K562 (cell line): ENCODE measurements at regions of chr11 and their contacts with region 1.

Region 1: DNA sequence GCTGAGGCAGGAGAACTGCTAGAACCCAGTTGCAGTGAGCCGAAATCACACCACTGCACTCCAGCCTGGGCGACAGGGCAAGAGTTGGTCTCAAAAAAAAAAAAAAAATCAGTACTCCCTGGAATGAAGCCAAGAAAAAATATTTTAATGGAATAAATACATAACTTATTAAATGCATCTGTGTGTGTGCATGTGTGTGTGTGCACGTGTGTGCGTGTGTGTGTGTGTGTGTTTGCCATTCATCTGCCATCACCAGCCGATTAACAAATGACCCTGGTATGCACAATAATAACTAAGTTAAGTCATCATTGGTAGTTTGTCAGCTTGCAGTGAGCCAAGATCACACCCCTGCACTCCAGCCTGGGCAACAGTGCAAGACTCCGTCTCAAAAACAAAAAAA is 35.0 kb upstream of the SCGB1A1 start:
- DNase-seq: no peak
- ATAC-seq: no peak
- H3K4me3 ChIP-seq: no peak overlapping the region
- H3K27ac ChIP-seq: no peak overlapping the region
- H3K4me1 ChIP-seq: peaks cover 4 to 7% of the 10 kb centered on the region in 2 experiments; a peak in 3 of 5 replicates
- H3K27me3 ChIP-seq: no peaks in the 10 kb centered on the region
- CTCF ChIP-seq: no peak
- EP300 ChIP-seq: no peak
- POLR2A ChIP-seq: no peak
- RAD21 ChIP-seq: no peak

Region 2: GRCh38 chr11:62542750-62543567 is 159.1 kb after region 1 on chr11:
- CTCF ChIA-PET with region 1: no interaction called
- POLR2A ChIA-PET with region 1: no interaction called
- in situ Hi-C with region 1: no loop called
- intact Hi-C with region 1: no loop called
- DNase-seq: peak; percentile 83 to 91 (median 87)
- ATAC-seq: peak; percentile 74
- H3K4me3 ChIP-seq: peak overlapping the region; percentile 14; the same call in 1 of the 2 replicates
- H3K27ac ChIP-seq: peak overlapping the region; percentile 27
- H3K4me1 ChIP-seq: peaks cover 77 to 88% of the 10 kb centered on the region in 2 experiments
- H3K27me3 ChIP-seq: no peaks in the 10 kb centered on the region
- CTCF ChIP-seq: peak; percentile 97 to 98 (median 97)
- EP300 ChIP-seq: 0 out of 2 replicates have a peak, but pooled peaks have one; percentile 7
- POLR2A ChIP-seq: no peak
- RAD21 ChIP-seq: peak; percentile 94 to 99

Region 3: DNA sequence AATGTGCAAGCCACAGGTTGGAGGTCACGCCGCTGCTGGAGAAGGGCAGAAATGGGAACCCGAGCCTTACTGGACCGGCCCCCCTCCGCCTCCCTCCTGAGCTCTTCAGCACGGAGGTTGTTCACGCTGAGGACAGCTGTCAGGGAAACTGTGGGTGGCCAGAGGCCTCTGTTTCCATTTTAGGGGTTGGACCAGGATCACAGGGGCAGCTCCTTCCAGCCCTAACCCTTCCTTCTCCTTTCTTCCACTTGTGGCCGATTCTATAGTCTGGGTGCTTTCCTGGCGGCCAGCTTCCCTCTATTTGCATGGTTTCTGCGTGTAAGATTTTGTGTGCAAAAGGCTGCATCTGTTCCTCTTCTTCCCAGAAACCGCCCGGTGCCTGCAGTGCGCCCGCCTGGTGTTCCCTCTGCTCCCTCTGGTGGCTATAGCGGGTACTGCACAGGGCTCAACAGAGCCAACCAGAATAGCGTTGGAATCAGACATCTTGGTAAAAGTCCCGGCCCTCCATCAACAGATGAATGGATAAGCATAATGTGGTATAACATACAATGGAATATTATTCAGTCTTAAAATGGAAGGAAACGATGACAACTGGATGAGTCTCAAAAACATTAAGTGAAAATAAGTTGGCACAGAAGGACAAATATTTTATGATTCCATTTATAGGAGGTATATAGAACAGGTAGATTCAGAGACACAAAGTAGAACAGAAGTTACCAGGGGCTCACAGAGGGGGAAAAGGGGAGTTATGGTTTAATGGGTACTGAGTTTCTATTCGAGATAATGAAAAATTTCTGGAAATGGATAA is 640.2 kb after region 1 on chr11:
- CTCF ChIA-PET with region 1: interaction called, 4 read pairs
- POLR2A ChIA-PET with region 1: no interaction called
- in situ Hi-C with region 1: loop called (anchors 25 kb)
- intact Hi-C with region 1: loop called (anchors 5 kb)
- DNase-seq: peak; percentile 80 to 83 (median 82)
- ATAC-seq: peak; percentile 94
- H3K4me3 ChIP-seq: no peak overlapping the region
- H3K27ac ChIP-seq: no peak overlapping the region
- H3K4me1 ChIP-seq: peaks cover 0 to 8% of the 10 kb centered on the region in 2 experiments; a peak in 2 of 5 replicates
- H3K27me3 ChIP-seq: peaks cover 3 to 45% of the 10 kb centered on the region in 2 experiments; a peak in 3 of 5 replicates
- CTCF ChIP-seq: peak; percentile 95 to 99 (median 98)
- EP300 ChIP-seq: no peak
- POLR2A ChIP-seq: no peak
- RAD21 ChIP-seq: peak; percentile 94